Common myeloid progenitor, CD34-positive (primary cell): ENCODE measurements at regions of chr6 and their contacts with region 1.

Region 1: GRCh38 chr6:203661-204060 is 88.6 kb upstream of the DUSP22 start:
- DNase-seq: no peak
- H3K4me3 ChIP-seq: no peak overlapping the region
- H3K27ac ChIP-seq: no peak overlapping the region
- H3K4me1 ChIP-seq: peaks cover 0 to 11% (median 6%) of the 10 kb centered on the region in 4 experiments
- H3K27me3 ChIP-seq: no peaks in the 10 kb centered on the region

Region 2: GRCh38 chr6:178119-178518 is 25.5 kb before region 1 on chr6:
- CTCF ChIA-PET with region 1: no interaction called
- POLR2A ChIA-PET with region 1: no interaction called
- DNase-seq: no peak
- H3K4me3 ChIP-seq: no peak overlapping the region
- H3K27ac ChIP-seq: no peak overlapping the region
- H3K4me1 ChIP-seq: no peaks in the 10 kb centered on the region
- H3K27me3 ChIP-seq: peaks cover 0 to 4% (median 0%) of the 10 kb centered on the region in 5 experiments

Region 3: DNA sequence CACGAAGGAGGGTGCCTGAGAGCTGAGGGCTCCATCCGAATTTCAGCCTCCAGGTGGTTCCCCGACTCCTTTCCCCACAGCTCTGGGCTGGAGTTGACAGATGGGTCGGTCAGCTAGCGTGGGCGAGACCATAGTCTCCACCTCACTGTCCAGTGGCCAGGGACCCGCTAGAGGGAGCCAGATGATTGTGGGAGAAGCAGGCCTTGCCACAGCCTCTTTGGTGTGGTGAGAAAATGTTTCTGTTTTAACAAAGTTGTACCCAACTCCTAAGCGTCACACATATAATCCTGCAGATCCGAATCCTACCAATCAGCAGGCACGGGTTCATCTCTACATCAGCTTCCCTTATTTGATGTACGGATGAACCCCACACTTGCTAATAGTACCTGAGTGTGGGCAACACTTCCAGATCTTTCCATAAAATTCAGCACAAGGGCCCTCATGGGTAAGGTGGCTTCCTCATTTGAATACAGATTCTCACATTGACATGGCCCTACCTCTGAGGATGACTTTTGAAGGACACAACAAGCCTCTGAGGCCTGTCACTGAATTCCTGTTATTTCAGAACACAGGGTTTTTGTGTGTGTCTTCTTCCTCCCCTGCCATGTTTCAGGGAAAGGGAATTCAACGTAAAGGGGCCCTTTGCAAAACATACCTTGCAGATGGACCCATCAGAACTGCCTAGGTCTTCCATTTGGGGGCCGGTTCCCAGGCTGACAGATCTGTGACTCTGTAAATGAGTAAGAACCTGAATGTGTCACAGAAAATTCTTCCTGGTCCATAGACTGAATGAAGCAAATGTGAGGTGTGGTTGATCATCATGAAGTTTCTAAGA is 14.6 kb before region 1 on chr6:
- CTCF ChIA-PET with region 1: interaction called, 18 read pairs
- POLR2A ChIA-PET with region 1: no interaction called
- DNase-seq: peak; percentile 71 to 85 (median 79)
- H3K4me3 ChIP-seq: no peak overlapping the region
- H3K27ac ChIP-seq: no peak overlapping the region
- H3K4me1 ChIP-seq: peaks cover 2 to 19% (median 7%) of the 10 kb centered on the region in 4 experiments
- H3K27me3 ChIP-seq: no peaks in the 10 kb centered on the region

Region 4: GRCh38 chr6:217048-217659 is 13.5 kb after region 1 on chr6:
- CTCF ChIA-PET with region 1: interaction called, 11 read pairs
- POLR2A ChIA-PET with region 1: no interaction called
- DNase-seq: peak in 1 of 3 donors; percentile 29
- H3K4me3 ChIP-seq: no peak overlapping the region
- H3K27ac ChIP-seq: no peak overlapping the region
- H3K4me1 ChIP-seq: peaks cover 2 to 44% (median 25%) of the 10 kb centered on the region in 4 experiments
- H3K27me3 ChIP-seq: no peaks in the 10 kb centered on the region